GM12878 (cell line): ENCODE measurements at regions of chr10 and their contacts with region 1.

Region 1: GRCh38 chr10:113704637-113705343 is 25.1 kb downstream of the CASP7 start:
- DNase-seq: no peak
- ATAC-seq: peak; percentile 86
- H3K4me3 ChIP-seq: no peak overlapping the region
- H3K27ac ChIP-seq: no peak overlapping the region
- H3K4me1 ChIP-seq: peaks cover 6% of the 10 kb centered on the region; the same call in 1 of the 2 replicates
- H3K27me3 ChIP-seq: no peaks in the 10 kb centered on the region
- CTCF ChIP-seq: peak; percentile 52 to 67 (median 66); a peak in 5 of 6 replicates
- EP300 ChIP-seq: no peak
- POLR2A ChIP-seq: no peak
- RAD21 ChIP-seq: peak; percentile 70

Region 2: GRCh38 chr10:113780681-113781250 is 76.0 kb after region 1 on chr10:
- CTCF ChIA-PET with region 1: interaction called, 7 read pairs
- POLR2A ChIA-PET with region 1: no interaction called
- RAD21 ChIA-PET with region 1: no interaction called
- SMC1A ChIA-PET with region 1: no interaction called
- in situ Hi-C with region 1: no loop called
- intact Hi-C with region 1: loop called (anchors 5 kb)
- DNase-seq: no peak
- ATAC-seq: peak; percentile 64
- H3K4me3 ChIP-seq: no peak overlapping the region
- H3K27ac ChIP-seq: no peak overlapping the region
- H3K4me1 ChIP-seq: no peaks in the 10 kb centered on the region
- H3K27me3 ChIP-seq: no peaks in the 10 kb centered on the region
- CTCF ChIP-seq: 0 out of 6 replicates have a peak, but pooled peaks of 2 of the 3 experiments have one; percentile 6 to 16
- EP300 ChIP-seq: no peak
- POLR2A ChIP-seq: no peak
- RAD21 ChIP-seq: no peak

Region 3: DNA sequence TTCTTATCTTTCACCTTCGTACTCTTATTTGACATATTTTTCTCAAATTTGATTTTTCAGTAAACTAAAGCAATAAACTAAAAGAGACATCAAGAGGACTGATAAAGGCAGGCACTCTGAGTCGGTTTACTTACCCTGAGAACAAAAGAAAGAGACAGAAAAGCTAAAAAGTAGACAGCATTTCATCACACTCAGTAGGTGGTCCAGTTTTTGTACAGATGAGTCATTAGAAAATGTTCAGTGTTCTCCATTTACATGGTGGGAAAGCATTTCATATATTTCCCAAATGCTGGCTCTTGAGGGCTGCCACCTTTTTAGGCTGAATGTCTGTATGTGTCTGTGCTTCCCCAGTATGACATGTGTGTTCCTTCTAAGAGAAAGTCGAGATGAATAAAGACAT is 202.4 kb after region 1 on chr10:
- CTCF ChIA-PET with region 1: interaction called, 3 read pairs
- POLR2A ChIA-PET with region 1: no interaction called
- RAD21 ChIA-PET with region 1: no interaction called
- SMC1A ChIA-PET with region 1: no interaction called
- in situ Hi-C with region 1: no loop called
- intact Hi-C with region 1: loop called (anchors 10 kb)
- DNase-seq: no peak
- ATAC-seq: no peak
- H3K4me3 ChIP-seq: no peak overlapping the region
- H3K27ac ChIP-seq: no peak overlapping the region
- H3K4me1 ChIP-seq: no peaks in the 10 kb centered on the region
- H3K27me3 ChIP-seq: no peaks in the 10 kb centered on the region
- CTCF ChIP-seq: no peak
- EP300 ChIP-seq: no peak
- POLR2A ChIP-seq: no peak
- RAD21 ChIP-seq: no peak